Heart left ventricle (tissue), 16 donors: ENCODE measurements at regions of chr3 and their contacts with region 1.

Region 1: DNA sequence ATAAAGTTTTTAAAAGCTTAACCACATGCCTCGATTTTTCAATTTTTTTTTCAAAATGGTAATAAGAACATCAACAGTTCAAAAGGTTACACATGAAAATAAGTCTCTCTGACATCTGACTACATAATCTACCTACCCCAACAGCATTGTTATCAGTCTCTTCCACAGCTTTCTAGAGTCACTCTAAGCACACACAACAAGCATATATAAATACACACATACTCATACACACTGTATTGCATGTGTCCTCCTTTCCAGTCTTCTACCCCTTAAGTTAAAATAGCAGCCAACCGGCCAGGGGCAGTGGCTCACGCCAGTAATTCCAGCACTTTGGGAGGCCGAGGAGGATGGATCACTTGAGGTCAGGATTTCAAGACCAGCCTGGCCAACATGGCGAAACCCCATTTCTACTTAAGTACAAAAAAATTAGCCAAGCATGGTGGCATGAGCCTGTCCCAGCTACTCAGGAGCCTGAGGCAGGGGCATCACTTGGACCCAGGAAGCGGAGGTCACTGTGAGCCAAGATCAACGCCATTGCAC is 12.2 kb downstream of the TBL1XR1 start:
- DNase-seq: no peak
- ATAC-seq: peak in 2 of 4 donors; percentile 32 to 52
- H3K4me3 ChIP-seq: no peak overlapping the region
- H3K27ac ChIP-seq: no peak overlapping the region
- H3K4me1 ChIP-seq: peaks cover 5 to 62% (median 40%) of the 10 kb centered on the region in 12 donors
- H3K27me3 ChIP-seq: no peaks in the 10 kb centered on the region
- CTCF ChIP-seq: no peak
- POLR2A ChIP-seq: no peak

Region 2: DNA sequence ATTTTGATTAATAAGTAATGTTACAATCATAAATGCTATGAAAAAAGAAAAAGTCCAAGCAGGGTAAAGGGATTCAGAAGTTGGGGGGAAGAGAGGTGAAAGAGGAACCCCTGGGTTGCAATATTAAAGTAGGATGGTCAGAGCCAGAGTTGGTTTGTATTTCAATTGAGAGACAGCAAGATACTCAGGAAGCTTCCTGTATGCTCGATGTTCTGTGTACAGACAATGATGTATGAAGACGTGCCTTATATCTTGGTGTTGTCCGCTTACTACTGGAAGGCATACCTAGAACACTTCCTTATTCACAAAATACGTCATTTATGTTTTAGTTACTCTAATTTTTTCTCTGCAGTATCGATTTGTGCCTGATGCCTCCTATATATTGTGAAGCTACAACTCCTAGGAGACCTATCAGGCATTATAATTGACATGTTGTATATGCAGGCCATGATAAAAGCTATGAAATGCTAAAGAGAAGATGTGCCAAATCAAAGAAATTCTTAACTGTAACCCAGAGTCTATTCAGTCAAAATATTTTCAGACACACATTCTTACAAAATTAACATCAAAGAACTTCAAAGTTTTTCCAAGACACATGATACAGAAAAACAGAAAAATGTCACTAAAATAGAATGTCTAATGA is 75.3 kb before region 1 on chr3:
- intact Hi-C with region 1: loop called in 1 of 10 experiments (anchors 5 kb)
- DNase-seq: no peak
- ATAC-seq: peak in 2 of 4 donors; percentile 19 to 20
- H3K4me3 ChIP-seq: no peak overlapping the region
- H3K27ac ChIP-seq: no peak overlapping the region
- H3K4me1 ChIP-seq: peaks cover 0 to 75% (median 47%) of the 10 kb centered on the region in 12 donors
- H3K27me3 ChIP-seq: no peaks in the 10 kb centered on the region
- CTCF ChIP-seq: no peak
- POLR2A ChIP-seq: no peak

Region 3: DNA sequence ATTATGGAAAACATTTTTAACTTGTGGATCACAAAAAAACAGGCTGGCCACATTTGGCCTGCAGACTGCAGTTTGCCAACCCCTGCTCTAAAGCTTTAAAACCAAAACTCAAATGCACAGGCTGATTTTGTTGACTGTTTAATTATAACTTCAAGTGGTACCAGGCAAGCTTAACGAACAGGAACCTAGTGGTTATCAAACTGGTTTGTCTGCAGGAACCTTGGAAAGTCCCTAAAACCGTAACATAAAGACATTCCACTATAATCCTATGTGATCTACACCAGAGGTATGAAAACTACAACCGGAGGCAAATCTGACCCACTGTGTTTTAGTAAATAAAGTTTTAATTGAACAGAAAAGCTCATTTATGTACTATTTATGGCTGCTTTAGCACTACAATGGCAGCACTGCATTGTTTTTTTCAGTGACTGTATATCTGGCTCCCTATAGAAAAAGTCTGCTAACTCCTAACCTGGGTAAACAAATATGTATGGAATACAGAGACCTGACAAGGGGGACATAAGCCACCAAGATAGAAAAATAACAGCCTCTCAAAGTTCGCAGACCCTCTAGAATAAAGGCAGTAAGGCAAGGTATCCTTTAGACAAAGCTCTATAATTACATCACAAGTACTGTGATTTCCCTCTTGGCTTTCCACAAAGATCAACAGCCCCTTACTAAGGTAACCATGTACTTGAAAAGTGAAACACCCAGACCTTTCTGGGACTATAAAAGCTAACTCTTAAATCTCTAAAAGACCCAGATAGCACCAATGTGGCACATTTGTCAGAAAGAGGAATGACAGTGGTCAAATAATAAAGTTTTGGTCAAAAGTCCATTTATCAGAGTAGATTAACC is 40.0 kb before region 1 on chr3:
- intact Hi-C with region 1: loop called in 2 of 10 experiments (anchors 5 kb)
- DNase-seq: no peak
- ATAC-seq: no peak
- H3K4me3 ChIP-seq: peak overlapping the region in 1 of 12 donors; percentile 13
- H3K27ac ChIP-seq: peak overlapping the region in 1 of 12 donors; percentile 44
- H3K4me1 ChIP-seq: peaks cover 0 to 85% (median 65%) of the 10 kb centered on the region in 12 donors
- H3K27me3 ChIP-seq: no peaks in the 10 kb centered on the region
- CTCF ChIP-seq: no peak
- POLR2A ChIP-seq: no peak

Region 4: GRCh38 chr3:177263615-177264368 is 78.7 kb after region 1 on chr3:
- intact Hi-C with region 1: no loop called
- DNase-seq: no peak
- ATAC-seq: no peak
- H3K4me3 ChIP-seq: no peak overlapping the region
- H3K27ac ChIP-seq: peak overlapping the region in 1 of 12 donors; percentile 4
- H3K4me1 ChIP-seq: peaks cover 0 to 17% (median 0%) of the 10 kb centered on the region in 12 donors
- H3K27me3 ChIP-seq: no peaks in the 10 kb centered on the region
- CTCF ChIP-seq: no peak
- POLR2A ChIP-seq: no peak